WTC11 (cell line): ENCODE measurements at regions of chrX and their contacts with region 1.

Region 1: GRCh38 chrX:107776649-107777535 is 641 bp upstream of the NCBP2L start:
- DNase-seq: peak; percentile 67
- ATAC-seq: peak; percentile 72
- H3K4me3 Mint-ChIP-seq: peak overlapping the region; percentile 81
- H3K27ac Mint-ChIP-seq: no peak overlapping the region
- H3K4me1 Mint-ChIP-seq: peaks cover 30% of the 10 kb centered on the region
- H3K27me3 Mint-ChIP-seq: peaks cover 31% of the 10 kb centered on the region
- CTCF ChIP-seq: peak; percentile 35; the same call in 1 of the 2 replicates

Region 2: GRCh38 chrX:107654872-107655761 is 121.8 kb before region 1 on chrX:
- CTCF ChIA-PET with region 1: interaction called, 108 read pairs
- POLR2A ChIA-PET with region 1: interaction called, 3 read pairs
- DNase-seq: peak; percentile 85
- ATAC-seq: peak; percentile 95
- H3K4me3 Mint-ChIP-seq: peak overlapping the region; percentile 29; the same call in 1 of the 2 replicates
- H3K27ac Mint-ChIP-seq: peak overlapping the region; percentile 57
- H3K4me1 Mint-ChIP-seq: peaks cover 20% of the 10 kb centered on the region
- H3K27me3 Mint-ChIP-seq: no peaks in the 10 kb centered on the region
- CTCF ChIP-seq: peak; percentile 72

Region 3: DNA sequence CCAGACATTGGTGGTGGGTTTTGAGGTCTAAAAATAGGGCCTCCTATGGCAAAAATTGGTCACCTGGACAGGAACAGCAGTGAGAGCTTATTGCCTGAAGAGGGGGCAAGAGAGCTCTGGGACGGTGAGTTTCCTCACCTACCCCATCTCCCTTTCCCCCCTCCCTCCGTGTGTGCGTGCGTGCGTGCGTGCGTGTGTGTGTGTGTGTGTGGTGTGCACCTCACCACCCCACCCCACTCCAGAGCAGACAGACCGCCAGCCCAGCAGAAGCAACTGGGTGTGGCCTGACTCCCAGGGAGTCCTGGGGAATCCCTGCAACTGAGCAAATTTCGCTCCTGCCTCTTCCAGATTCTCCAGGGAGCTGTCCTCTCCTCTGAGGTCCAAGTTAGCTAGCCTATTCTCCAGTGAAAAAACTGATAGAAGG is 103.9 kb before region 1 on chrX:
- CTCF ChIA-PET with region 1: interaction called, 41 read pairs
- POLR2A ChIA-PET with region 1: interaction called, 8 read pairs
- DNase-seq: peak; percentile 54
- ATAC-seq: peak; percentile 65
- H3K4me3 Mint-ChIP-seq: 0 out of 2 replicates have a peak overlapping the region, but pooled peaks have one; percentile 24
- H3K27ac Mint-ChIP-seq: no peak overlapping the region
- H3K4me1 Mint-ChIP-seq: peaks cover 33% of the 10 kb centered on the region
- H3K27me3 Mint-ChIP-seq: 0 out of 2 replicates have a peak, but pooled peaks cover under 1% of the 10 kb centered on the region
- CTCF ChIP-seq: peak; percentile 43; the same call in 1 of the 2 replicates

Region 4: DNA sequence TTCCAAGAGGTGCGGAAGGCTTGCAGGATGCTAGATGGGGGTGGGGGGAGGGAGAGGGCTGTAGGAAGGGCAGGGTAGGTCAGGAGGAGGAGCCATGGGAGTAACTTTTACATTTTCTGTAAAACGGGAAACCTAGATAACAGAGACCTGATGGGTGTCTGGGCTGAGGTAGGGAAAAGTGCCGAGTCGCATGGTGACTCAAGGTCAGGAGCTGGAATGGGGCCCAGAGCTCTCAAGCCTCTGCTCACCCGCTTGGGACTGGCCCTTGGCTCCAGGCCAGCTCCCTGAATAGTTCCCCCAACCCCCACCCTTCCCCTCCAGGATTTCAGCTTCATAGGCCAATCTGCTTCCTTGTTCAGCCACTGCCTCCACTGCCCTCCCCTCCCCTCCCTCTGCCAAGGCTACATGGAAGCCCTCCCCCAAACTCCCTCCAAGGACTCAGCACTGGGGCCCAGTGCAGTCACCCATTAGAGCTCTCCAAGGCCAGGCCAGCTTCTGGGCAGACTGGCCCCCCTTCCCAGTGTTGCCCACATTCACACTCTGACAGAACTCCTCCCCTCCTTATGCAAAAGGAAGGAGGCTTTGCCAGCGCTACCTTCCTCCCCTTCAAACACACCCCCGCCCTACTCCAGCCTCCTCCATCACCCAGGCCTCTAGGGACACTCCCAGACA is 44.9 kb before region 1 on chrX:
- CTCF ChIA-PET with region 1: interaction called, 49 read pairs
- POLR2A ChIA-PET with region 1: interaction called, 7 read pairs
- DNase-seq: peak; percentile 52
- ATAC-seq: peak; percentile 78
- H3K4me3 Mint-ChIP-seq: no peak overlapping the region
- H3K27ac Mint-ChIP-seq: peak overlapping the region; percentile 74
- H3K4me1 Mint-ChIP-seq: peaks cover 52% of the 10 kb centered on the region
- H3K27me3 Mint-ChIP-seq: no peaks in the 10 kb centered on the region
- CTCF ChIP-seq: no peak

Region 5: GRCh38 chrX:107766470-107767150 is 10.3 kb before region 1 on chrX:
- CTCF ChIA-PET with region 1: interaction called, 11 read pairs
- POLR2A ChIA-PET with region 1: no interaction called
- DNase-seq: no peak
- ATAC-seq: peak; percentile 36; the same call in 1 of the 2 replicates
- H3K4me3 Mint-ChIP-seq: no peak overlapping the region
- H3K27ac Mint-ChIP-seq: no peak overlapping the region
- H3K4me1 Mint-ChIP-seq: peaks cover 15% of the 10 kb centered on the region
- H3K27me3 Mint-ChIP-seq: peaks cover under 1% of the 10 kb centered on the region; the same call in 1 of the 2 replicates
- CTCF ChIP-seq: no peak